SK-N-SH (cell line): ENCODE measurements at regions of chr16 and their contacts with region 1.

Region 1: GRCh38 chr16:600781-601180 is 10.9 kb downstream of the RAB40C start:
- DNase-seq: peak; percentile 70
- H3K4me3 ChIP-seq: no peak overlapping the region; a peak in 1 of 4 replicates
- H3K27ac ChIP-seq: no peak overlapping the region
- H3K4me1 ChIP-seq: peaks cover 0 to 6% of the 10 kb centered on the region in 2 experiments; a peak in 1 of 4 replicates
- H3K27me3 ChIP-seq: no peaks in the 10 kb centered on the region
- CTCF ChIP-seq: peak; percentile 30; the same call in 1 of the 2 replicates
- EP300 ChIP-seq: no peak
- RAD21 ChIP-seq: peak; percentile 37

Region 2: DNA sequence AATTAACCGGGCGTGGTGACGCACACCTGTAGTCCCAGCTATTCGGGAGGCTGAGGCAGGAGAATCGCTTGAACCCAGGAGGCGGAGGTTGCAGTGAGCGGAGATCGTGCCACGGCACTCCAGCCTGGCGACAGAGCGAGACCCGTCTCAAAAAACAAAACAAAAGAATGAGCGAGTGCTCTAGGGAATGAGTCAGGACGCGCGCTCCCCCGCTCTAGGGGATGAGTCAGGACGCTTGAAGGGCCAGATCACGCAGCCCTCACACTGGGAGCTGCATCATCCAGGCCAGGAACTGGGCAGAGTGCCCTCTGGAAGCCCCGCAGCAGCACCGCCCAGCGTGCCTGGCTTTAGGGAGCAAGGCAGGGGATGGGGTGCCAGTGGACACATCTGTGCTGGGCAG is 26.0 kb after region 1 on chr16:
- CTCF ChIA-PET with region 1: interaction called, 11 read pairs
- POLR2A ChIA-PET with region 1: interaction called, 3 read pairs
- DNase-seq: no peak
- H3K4me3 ChIP-seq: no peak overlapping the region
- H3K27ac ChIP-seq: peak overlapping the region in 1 of 2 experiments; percentile 91; a peak in 2 of 4 replicates
- H3K4me1 ChIP-seq: peaks cover 10 to 39% of the 10 kb centered on the region in 2 experiments; a peak in 3 of 4 replicates
- H3K27me3 ChIP-seq: no peaks in the 10 kb centered on the region
- CTCF ChIP-seq: no peak
- EP300 ChIP-seq: no peak
- RAD21 ChIP-seq: no peak